ENCODE measurements at regions of chr3 and their contacts with region 1.

Region 1: DNA sequence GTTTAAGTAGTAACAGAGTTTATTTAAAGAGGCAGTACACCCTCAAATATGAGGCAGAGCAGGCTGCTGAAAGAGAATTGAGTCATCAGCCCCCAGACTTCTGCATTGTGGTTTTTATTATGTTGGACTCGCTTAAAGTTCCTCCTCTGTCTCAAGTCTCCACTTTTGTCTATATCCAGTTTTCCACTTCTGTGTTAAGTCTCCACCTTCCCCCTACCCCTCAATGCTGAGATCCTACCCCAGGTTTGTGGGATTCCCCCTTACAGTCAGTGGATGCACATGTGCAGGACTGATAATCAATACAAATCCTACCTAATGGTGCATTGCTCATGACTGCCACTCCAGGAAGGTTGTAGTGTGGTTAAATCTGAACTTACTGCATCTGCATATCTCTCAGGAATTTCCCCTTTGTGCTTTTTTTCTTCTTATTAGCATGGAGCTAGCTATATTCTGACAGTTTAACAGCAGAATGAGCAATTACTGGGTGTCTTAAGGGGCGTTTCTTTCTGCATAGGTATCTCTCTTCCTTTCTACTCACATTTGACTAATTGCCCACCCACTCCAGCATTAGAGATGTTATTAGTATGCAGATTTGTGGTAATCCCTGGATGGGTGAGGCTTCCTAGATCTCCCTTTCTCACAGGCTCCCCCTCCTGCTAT is 11.9 kb upstream of the CD200R1L start:
- DNase-seq: peak; percentile 32
- ATAC-seq: peak; percentile 76
- H3K4me3 Mint-ChIP-seq: peak overlapping the region; percentile 69
- H3K27ac Mint-ChIP-seq: peak overlapping the region; percentile 89
- H3K4me1 Mint-ChIP-seq: peaks cover 45% of the 10 kb centered on the region
- H3K27me3 Mint-ChIP-seq: no peaks in the 10 kb centered on the region
- CTCF ChIP-seq: no peak

Region 2: GRCh38 chr3:112667599-112667998 is 190.9 kb before region 1 on chr3:
- CTCF ChIA-PET with region 1: no interaction called
- POLR2A ChIA-PET with region 1: no interaction called
- intact Hi-C with region 1: no loop called
- DNase-seq: no peak
- ATAC-seq: no peak
- H3K4me3 Mint-ChIP-seq: no peak overlapping the region
- H3K27ac Mint-ChIP-seq: no peak overlapping the region
- H3K4me1 Mint-ChIP-seq: no peaks in the 10 kb centered on the region
- H3K27me3 Mint-ChIP-seq: peaks cover 6% of the 10 kb centered on the region
- CTCF ChIP-seq: no peak

Region 3: GRCh38 chr3:112767177-112767576 is 91.4 kb before region 1 on chr3:
- CTCF ChIA-PET with region 1: no interaction called
- POLR2A ChIA-PET with region 1: no interaction called
- intact Hi-C with region 1: loop called (anchors 5 kb)
- DNase-seq: no peak
- ATAC-seq: peak; percentile 97
- H3K4me3 Mint-ChIP-seq: peak overlapping the region; percentile 25
- H3K27ac Mint-ChIP-seq: peak overlapping the region; percentile 44
- H3K4me1 Mint-ChIP-seq: peaks cover 37% of the 10 kb centered on the region
- H3K27me3 Mint-ChIP-seq: no peaks in the 10 kb centered on the region
- CTCF ChIP-seq: no peak

Region 4: DNA sequence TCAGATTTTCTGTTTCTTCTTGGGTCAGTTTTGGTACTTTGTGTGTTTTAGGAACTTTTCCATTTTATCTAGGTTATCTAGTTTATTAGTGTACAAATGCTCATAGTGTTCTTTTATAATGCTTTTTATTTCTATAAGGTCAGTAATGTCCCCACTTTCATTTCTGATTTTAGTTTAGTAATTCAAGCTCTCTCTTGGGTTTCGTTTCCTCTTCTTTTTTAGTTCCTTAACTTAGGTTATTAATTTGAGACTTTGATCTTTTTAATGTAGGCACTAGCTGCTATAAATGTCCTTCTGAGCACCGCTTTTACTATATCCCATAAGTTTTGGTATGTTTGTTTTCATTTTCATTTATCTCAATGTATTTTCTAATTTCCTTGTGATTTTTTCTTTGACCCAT is 15.1 kb after region 1 on chr3:
- CTCF ChIA-PET with region 1: no interaction called
- POLR2A ChIA-PET with region 1: no interaction called
- intact Hi-C with region 1: loop called (anchors 1 kb)
- DNase-seq: no peak
- ATAC-seq: peak; percentile 79
- H3K4me3 Mint-ChIP-seq: peak overlapping the region; percentile 75
- H3K27ac Mint-ChIP-seq: peak overlapping the region; percentile 80
- H3K4me1 Mint-ChIP-seq: peaks cover 43% of the 10 kb centered on the region
- H3K27me3 Mint-ChIP-seq: no peaks in the 10 kb centered on the region
- CTCF ChIP-seq: no peak

Region 5: DNA sequence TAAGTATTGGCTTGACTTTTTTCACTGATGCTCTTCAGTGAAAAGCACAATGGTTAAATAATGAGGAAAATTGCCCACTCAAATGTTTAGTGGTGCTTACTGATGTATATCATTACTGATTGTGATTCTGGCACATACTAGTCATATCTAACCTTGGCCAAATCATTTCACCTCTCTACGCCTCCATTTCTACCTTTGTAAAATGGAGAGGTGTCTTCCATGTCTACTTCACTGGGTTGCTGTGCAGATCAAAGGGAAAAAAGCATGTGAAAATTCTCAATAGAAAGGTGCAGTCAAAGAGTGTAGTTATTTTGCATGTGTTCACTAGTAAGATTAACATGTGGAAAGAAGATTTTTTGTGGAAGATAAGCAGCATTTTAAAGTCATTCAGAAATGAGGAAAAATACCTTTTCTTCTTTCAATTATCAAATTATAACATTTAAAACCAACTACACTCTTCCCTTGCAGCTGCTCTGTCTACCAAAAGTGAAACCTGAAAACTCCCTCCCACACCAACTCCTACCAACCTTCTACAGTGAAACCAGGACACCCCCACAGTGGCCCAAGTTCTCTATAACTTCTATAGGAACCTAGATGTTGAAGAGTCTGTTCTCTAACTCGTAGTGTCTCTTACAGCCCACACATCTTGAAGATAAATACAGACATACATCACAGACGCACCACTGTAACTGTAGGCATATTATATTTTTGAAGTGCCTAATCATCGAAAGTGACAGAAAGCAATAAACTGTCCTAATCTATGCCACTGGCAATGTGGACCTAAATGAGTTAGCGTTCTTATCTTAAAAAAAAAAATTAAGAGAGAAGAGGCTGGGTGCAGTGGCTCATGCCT is 115.0 kb after region 1 on chr3:
- CTCF ChIA-PET with region 1: interaction called, 5 read pairs
- POLR2A ChIA-PET with region 1: interaction called, 5 read pairs
- intact Hi-C with region 1: loop called (anchors 2 kb)
- DNase-seq: no peak
- ATAC-seq: peak; percentile 75
- H3K4me3 Mint-ChIP-seq: peak overlapping the region; percentile 84
- H3K27ac Mint-ChIP-seq: peak overlapping the region; percentile 76
- H3K4me1 Mint-ChIP-seq: peaks cover 80% of the 10 kb centered on the region
- H3K27me3 Mint-ChIP-seq: no peaks in the 10 kb centered on the region
- CTCF ChIP-seq: no peak

Measured in activated B cell treated with CpG ODN at 0.5 μM for 24 hours (primary cell).